ENCODE measurements at regions of chr6 and their contacts with region 1.

Region 1: DNA sequence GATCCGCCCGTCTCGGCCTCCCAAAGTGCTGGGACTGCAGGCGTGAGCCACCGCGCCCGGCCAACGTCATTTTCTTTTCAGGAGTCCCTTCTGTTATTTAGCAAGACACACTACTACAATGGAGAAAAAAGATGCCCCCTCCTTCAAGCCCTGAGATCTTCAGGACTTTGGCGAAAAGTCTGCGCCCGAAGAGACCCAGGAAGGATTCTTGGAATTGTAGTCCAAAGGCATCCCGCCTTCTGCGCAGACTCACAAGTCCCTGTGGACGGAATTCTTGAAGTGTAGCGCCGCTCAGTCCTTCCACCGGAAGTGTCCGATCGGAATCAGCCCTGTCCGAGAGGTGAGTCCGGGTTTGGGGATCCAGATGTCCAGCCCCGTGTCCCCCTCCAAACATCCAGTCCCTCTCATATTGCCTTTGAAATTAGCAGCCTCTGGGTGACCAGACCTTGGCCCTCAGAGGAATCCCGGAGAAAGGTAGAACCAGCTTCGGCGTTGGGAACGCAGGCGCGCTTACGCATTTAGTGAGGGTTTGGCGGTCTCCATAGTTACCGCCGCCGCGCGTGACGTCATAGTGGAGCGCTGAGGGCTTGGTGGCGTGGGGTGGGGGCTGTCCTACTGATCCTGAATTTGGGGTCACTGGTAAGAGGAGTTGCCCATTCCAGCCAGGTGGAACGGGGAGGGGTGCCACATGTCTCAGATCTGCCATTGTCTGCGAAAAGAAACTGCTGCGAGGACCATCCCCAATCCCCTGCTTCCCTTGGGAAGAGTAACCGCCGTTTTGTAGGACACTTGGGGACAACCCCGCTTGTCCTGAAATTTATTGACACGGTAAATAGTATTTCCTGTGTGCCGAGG is 490 bp downstream of the ZNF165 start:
- DNase-seq: peak; percentile 93
- H3K4me3 ChIP-seq: peak overlapping the region; percentile 52 to 67 (median 66)
- H3K27ac ChIP-seq: peak overlapping the region; percentile 96
- H3K4me1 ChIP-seq: peaks cover 4% of the 10 kb centered on the region
- H3K27me3 ChIP-seq: no peaks in the 10 kb centered on the region
- CTCF ChIP-seq: no peak

Region 2: GRCh38 chr6:27838058-27838944 is 242.6 kb before region 1 on chr6:
- CTCF ChIA-PET with region 1: no interaction called
- dilution Hi-C with region 1: no loop called
- in situ Hi-C with region 1: no loop called
- intact Hi-C with region 1: loop called (anchors 10 kb)
- DNase-seq: peak; percentile 97
- H3K4me3 ChIP-seq: peak overlapping the region; percentile 84 to 92 (median 92)
- H3K27ac ChIP-seq: peak overlapping the region; percentile 98
- H3K4me1 ChIP-seq: peaks cover 7% of the 10 kb centered on the region
- H3K27me3 ChIP-seq: no peaks in the 10 kb centered on the region
- CTCF ChIP-seq: no peak

Region 3: GRCh38 chr6:27902335-27903314 is 178.2 kb before region 1 on chr6:
- CTCF ChIA-PET with region 1: no interaction called
- dilution Hi-C with region 1: no loop called
- in situ Hi-C with region 1: no loop called
- intact Hi-C with region 1: loop called (anchors 1 kb)
- DNase-seq: peak; percentile 80
- H3K4me3 ChIP-seq: peak overlapping the region; percentile 55 to 84 (median 68)
- H3K27ac ChIP-seq: peak overlapping the region; percentile 60
- H3K4me1 ChIP-seq: peaks cover 10% of the 10 kb centered on the region
- H3K27me3 ChIP-seq: no peaks in the 10 kb centered on the region
- CTCF ChIP-seq: no peak

Region 4: GRCh38 chr6:28104392-28105244 is 23.8 kb after region 1 on chr6:
- CTCF ChIA-PET with region 1: no interaction called
- dilution Hi-C with region 1: no loop called
- in situ Hi-C with region 1: no loop called
- intact Hi-C with region 1: loop called (anchors 1 kb)
- DNase-seq: peak; percentile 80
- H3K4me3 ChIP-seq: peak overlapping the region; percentile 66 to 86 (median 73)
- H3K27ac ChIP-seq: peak overlapping the region; percentile 54
- H3K4me1 ChIP-seq: peaks cover 10% of the 10 kb centered on the region
- H3K27me3 ChIP-seq: no peaks in the 10 kb centered on the region
- CTCF ChIP-seq: peak; percentile 35 to 76

Region 5: DNA sequence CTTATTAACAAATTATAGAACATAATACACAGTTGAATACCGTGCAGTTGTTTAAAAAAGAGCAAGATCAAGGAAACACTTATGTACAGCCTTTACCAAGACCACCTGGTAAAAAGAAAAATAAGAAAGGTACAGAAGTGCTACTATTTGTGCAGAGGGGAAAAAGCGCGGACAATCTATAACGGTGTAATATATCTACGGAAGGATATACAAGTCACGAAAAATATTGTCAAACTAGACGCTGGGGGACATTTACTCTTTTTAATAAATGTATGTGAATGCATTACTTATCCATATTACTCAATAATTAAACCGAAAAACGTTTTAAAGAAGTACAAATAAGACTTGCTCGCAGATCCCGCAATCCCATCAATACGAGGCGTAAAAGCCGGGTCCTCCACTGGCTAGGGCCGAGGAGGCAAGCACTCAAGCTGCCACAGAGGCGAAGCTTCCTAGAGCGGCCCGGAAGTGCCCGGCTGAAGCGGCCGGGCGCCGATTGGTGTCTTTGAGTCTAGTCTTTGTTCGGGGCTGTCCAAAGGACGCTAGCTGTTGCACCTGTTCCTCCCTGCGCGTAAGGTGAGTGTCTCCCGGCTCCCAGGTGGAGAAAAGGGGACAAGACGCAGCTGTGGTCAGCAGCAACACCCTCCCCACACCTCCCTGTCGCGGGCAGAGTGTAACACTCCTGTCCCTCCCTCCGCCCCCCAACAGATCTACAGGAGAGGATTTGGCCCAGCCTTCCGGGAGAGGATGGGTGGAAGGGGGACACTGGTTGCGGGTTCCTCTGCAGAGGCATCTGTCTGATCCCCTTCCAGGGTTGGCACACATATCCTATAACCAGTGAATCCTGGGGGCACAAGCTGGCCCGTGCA is 43.5 kb after region 1 on chr6 and contains the start of gene ZSCAN16:
- CTCF ChIA-PET with region 1: no interaction called
- dilution Hi-C with region 1: no loop called
- in situ Hi-C with region 1: no loop called
- intact Hi-C with region 1: loop called (anchors 1 kb)
- DNase-seq: peak; percentile 85
- H3K4me3 ChIP-seq: peak within 1 kb of the TSS; percentile 66 to 81 (median 73)
- H3K27ac ChIP-seq: peak within 1 kb of the TSS; percentile 27
- H3K4me1 ChIP-seq: peaks cover 7% of the 10 kb centered on the region
- H3K27me3 ChIP-seq: no peaks in the 10 kb centered on the region
- CTCF ChIP-seq: no peak
- total RNA-seq, gene ZSCAN16: 1.1 to 1.7 TPM

Measured in mammary epithelial cell (primary cell).